ENCODE measurements at regions of chr11 and their contacts with region 1.

Region 1: DNA sequence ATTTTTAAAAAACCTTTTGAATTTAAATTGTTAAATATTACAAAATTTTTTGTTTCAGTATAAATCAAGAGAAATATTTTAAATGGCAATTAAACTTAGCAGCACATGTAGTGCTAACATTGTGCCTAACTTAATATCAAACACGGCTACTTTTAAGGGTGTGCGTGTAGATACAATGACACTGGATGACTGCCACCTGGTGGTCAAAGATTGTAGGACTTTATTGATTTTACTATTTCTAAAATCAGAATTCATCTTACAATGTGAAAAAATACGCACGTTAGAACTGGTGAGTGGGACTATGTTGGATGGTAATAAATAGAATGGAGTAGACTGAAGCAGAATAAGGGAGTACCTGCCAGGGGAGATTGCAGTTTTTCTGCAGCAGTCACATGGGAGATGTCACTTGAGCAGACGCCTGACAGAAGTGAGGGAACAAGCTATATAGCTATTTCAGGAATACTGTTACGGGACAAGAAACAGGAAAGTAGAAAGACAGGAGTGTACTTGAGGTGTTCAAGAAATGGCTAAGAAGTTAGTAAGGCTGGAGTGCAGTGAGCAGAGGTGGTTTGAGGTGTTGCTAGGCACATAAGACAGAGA is 52.9 kb downstream of the UVRAG start:
- DNase-seq: peak in 2 of 4 donors; percentile 41 to 59
- ATAC-seq: peak; percentile 87
- H3K4me3 ChIP-seq: no peak overlapping the region
- H3K27ac ChIP-seq: no peak overlapping the region
- H3K4me1 ChIP-seq: peaks cover 0 to 46% of the 10 kb centered on the region in 2 donors
- H3K27me3 ChIP-seq: no peaks in the 10 kb centered on the region
- CTCF ChIP-seq: peak; percentile 59 to 72

Region 2: GRCh38 chr11:75597636-75598035 is 270.2 kb before region 1 on chr11:
- intact Hi-C with region 1: no loop called
- DNase-seq: no peak
- ATAC-seq: peak; percentile 32
- H3K4me3 ChIP-seq: no peak overlapping the region
- H3K27ac ChIP-seq: no peak overlapping the region
- H3K4me1 ChIP-seq: no peaks in the 10 kb centered on the region
- H3K27me3 ChIP-seq: no peaks in the 10 kb centered on the region
- CTCF ChIP-seq: peak in 1 of 2 donors; percentile 25

Region 3: DNA sequence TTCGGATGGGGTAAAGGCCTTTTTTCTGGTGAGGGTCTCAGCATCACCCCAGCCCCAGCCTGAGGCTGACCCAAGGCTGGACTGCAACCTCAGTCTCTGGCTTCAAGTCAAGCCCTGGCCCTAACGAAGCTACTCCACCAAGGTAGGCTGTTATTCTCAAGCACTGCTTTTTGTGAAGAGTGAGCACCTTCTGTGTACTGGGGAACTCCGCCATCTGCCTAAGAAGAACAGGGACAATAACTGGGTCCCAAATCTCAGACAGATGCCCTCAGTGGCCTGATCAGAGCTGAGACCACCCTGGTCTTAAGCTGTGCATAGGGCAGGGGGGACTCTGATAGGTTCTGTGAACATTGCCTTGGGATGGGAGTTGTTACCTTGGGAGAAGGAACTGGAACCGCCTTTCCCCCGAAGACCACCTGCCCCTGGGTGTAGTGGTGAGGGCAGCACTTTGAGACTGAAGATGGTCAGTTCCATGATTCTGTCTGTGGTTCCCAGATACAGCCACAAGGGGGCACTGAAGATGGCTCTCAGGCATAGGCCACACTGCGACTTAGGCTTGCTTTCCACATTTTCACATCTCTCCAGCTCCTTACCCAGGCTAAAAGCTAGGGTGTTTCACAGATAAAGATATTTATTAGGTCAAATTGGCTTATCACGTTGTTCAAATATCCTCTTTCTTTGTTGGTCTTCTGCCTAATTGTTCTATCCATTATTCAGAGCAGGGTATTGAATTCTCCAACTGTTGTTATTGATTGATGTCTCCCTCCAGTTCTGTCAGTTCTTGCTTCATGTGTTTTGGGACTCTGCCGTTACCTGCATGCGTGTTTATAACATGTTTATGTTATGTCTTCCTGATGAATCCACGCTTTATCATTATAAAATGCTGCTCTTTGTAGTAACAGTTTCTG is 64.7 kb before region 1 on chr11:
- intact Hi-C with region 1: loop called in 1 of 2 experiments (anchors 5 kb)
- DNase-seq: peak in 3 of 4 donors; percentile 69 to 81 (median 76)
- ATAC-seq: peak; percentile 98
- H3K4me3 ChIP-seq: no peak overlapping the region
- H3K27ac ChIP-seq: no peak overlapping the region
- H3K4me1 ChIP-seq: peaks cover 0 to 11% of the 10 kb centered on the region in 2 donors
- H3K27me3 ChIP-seq: no peaks in the 10 kb centered on the region
- CTCF ChIP-seq: peak; percentile 92 to 93

Region 4: GRCh38 chr11:75966546-75967287 is 98.8 kb after region 1 on chr11:
- intact Hi-C with region 1: no loop called
- DNase-seq: no peak
- ATAC-seq: no peak
- H3K4me3 ChIP-seq: no peak overlapping the region
- H3K27ac ChIP-seq: no peak overlapping the region
- H3K4me1 ChIP-seq: peaks cover 0 to 14% of the 10 kb centered on the region in 2 donors
- H3K27me3 ChIP-seq: no peaks in the 10 kb centered on the region
- CTCF ChIP-seq: no peak

Region 5: GRCh38 chr11:75986966-75987365 is 119.1 kb after region 1 on chr11:
- intact Hi-C with region 1: no loop called
- DNase-seq: no peak
- ATAC-seq: no peak
- H3K4me3 ChIP-seq: no peak overlapping the region
- H3K27ac ChIP-seq: no peak overlapping the region
- H3K4me1 ChIP-seq: no peaks in the 10 kb centered on the region
- H3K27me3 ChIP-seq: no peaks in the 10 kb centered on the region
- CTCF ChIP-seq: no peak

Measured in left lung (tissue), 14 donors.